ENCODE measurements at regions of chr7 and their contacts with region 1.

Region 1: DNA sequence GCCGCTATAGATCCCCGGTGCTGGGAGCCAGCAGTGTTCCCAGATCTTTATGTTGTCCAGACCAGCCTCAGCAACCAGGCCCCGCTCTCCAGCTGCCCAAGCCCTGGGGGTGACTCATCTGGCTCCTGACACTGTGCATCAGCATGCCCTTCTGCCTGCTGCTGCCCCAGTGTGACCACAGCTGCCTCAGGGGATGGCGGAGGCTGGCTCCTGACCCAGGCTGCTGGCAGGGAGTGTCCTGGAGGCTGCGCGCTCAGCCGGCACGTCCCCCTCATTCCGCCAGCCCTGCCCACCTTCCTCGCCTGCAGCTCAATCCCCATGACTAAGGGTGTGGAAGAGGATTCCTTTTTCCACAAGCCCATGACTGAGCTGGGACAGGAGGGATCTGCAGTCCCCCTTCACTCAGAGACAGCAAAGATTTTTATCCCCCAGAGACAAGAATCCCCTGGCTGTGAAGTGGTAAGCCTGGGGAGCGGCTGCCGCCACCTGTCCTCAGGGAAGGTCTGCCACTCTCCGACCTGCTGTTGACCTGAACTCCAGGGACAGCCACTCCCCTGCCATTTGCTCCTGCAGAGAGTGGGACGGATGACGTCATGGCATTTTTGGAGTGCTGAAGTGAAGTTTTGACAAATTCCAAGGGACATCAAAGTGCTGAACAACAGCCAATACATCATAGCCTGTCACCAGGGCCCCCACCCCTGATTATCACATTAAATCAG is 182.8 kb upstream of the BMPER start:
- DNase-seq: peak; percentile 59
- H3K4me3 ChIP-seq: no peak overlapping the region
- H3K27ac ChIP-seq: peak overlapping the region; percentile 33
- H3K4me1 ChIP-seq: peaks cover 55% of the 10 kb centered on the region
- H3K27me3 ChIP-seq: no peaks in the 10 kb centered on the region
- CTCF ChIP-seq: no peak
- POLR2A ChIP-seq: no peak

Region 2: DNA sequence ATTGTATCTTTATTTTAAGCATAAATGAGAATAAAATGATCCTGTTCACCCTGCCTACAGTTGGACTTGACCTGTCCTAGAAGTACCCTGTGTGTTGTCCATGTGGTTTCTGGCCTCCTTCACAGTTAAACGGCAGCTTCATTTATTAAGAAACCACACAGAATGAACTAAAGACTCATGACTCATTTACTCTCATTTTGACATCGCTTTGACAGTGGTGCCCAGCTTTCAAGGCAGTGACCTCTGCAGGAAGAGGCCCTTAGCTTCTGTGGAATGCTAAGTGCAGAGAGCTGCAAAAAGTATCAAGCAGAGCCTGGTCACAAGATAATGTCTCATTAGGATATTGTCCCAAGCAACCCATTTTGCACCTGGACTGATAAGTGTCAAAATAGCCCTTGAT is 1133.9 kb before region 1 on chr7:
- CTCF ChIA-PET with region 1: no interaction called
- POLR2A ChIA-PET with region 1: no interaction called
- dilution Hi-C with region 1: no loop called
- intact Hi-C with region 1: loop called (anchors 5 kb)
- DNase-seq: peak; percentile 85
- H3K4me3 ChIP-seq: no peak overlapping the region
- H3K27ac ChIP-seq: peak overlapping the region; percentile 91
- H3K4me1 ChIP-seq: peaks cover 49% of the 10 kb centered on the region
- H3K27me3 ChIP-seq: no peaks in the 10 kb centered on the region
- CTCF ChIP-seq: peak in 1 of 2 donors; percentile 6
- POLR2A ChIP-seq: no peak

Region 3: DNA sequence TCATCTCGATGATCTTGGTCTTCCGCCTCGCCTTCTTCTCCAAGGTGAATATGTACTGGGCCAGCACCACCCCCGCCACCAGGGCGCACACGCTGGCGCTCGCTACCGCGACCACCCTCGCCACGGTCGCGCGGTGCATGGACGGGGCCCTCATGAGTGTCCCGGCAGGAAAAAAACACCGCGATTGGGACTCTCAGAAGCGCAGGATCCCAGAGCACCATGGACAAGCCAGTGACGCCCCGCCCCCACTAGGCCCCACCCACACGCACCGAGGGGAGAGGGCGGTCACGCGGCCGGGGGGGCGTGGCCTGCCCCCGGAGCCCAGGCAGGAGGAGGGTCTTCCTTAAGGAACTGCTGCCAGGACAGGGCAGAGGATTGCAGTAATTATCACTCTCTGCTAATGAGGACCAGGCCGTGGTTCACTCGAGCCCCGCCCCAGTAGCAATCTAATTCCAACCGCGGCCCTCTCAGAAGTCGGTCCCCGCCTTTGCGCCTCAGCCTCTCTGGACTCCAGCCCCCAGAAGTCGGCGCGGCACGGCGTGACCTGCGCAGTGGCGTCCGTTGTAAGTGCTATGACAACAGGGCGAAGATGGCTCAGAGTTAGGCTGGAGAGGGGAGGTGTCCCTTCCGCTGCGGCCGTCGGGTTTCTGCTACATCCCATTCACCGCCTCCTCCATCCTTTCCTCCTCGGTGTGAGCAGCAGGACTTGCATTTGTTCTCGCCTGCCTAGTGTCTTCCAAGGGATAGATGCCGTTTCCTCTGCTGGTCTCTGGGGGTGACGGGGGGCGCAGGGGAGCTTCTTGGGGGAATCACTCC is 593.3 kb before region 1 on chr7 and contains the start of gene BBS9:
- CTCF ChIA-PET with region 1: no interaction called
- POLR2A ChIA-PET with region 1: no interaction called
- dilution Hi-C with region 1: no loop called
- intact Hi-C with region 1: loop called (anchors 2 kb)
- DNase-seq: peak; percentile 96
- H3K4me3 ChIP-seq: peak within 1 kb of the TSS; percentile 48 to 85 (median 71)
- H3K27ac ChIP-seq: no peak within 1 kb of the TSS
- H3K4me1 ChIP-seq: peaks cover 8% of the 10 kb centered on the region
- H3K27me3 ChIP-seq: no peaks in the 10 kb centered on the region
- CTCF ChIP-seq: no peak
- POLR2A ChIP-seq: peak; percentile 64
- total RNA-seq, gene BBS9: 14.1 and 17.4 TPM in 2 replicates

Region 4: GRCh38 chr7:33354201-33354600 is 368.3 kb before region 1 on chr7:
- CTCF ChIA-PET with region 1: no interaction called
- POLR2A ChIA-PET with region 1: no interaction called
- dilution Hi-C with region 1: no loop called
- intact Hi-C with region 1: loop called (anchors 1 kb)
- DNase-seq: peak; percentile 61
- H3K4me3 ChIP-seq: no peak overlapping the region
- H3K27ac ChIP-seq: no peak overlapping the region
- H3K4me1 ChIP-seq: peaks cover 3% of the 10 kb centered on the region
- H3K27me3 ChIP-seq: no peaks in the 10 kb centered on the region
- CTCF ChIP-seq: no peak
- POLR2A ChIP-seq: no peak

Region 5: DNA sequence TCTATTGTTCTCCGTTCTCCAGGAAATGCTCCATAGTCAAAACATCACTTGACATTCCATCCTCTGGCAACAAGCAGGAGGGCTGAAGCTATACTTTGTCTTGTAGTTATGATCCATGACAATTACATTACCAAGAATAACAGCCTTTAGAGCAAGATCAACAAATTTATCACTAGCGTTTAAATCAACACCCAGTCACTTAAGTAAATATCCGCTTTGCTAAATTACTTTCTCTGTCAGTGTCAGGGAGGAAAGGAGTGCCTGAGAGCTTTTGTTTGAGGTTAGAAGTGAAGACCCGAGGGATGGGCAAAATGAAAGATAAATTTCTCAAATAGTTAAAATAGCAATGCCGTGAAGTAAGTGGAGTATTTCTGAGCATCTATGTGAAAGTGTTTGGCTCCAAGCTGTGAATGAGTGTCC is 53.3 kb before region 1 on chr7:
- CTCF ChIA-PET with region 1: no interaction called
- POLR2A ChIA-PET with region 1: no interaction called
- dilution Hi-C with region 1: no loop called
- intact Hi-C with region 1: loop called (anchors 1 kb)
- DNase-seq: peak; percentile 93
- H3K4me3 ChIP-seq: peak overlapping the region in 1 of 3 experiments; percentile 31
- H3K27ac ChIP-seq: peak overlapping the region; percentile 85
- H3K4me1 ChIP-seq: peaks cover 30% of the 10 kb centered on the region
- H3K27me3 ChIP-seq: no peaks in the 10 kb centered on the region
- CTCF ChIP-seq: no peak
- POLR2A ChIP-seq: peak; percentile 41

Region 6: DNA sequence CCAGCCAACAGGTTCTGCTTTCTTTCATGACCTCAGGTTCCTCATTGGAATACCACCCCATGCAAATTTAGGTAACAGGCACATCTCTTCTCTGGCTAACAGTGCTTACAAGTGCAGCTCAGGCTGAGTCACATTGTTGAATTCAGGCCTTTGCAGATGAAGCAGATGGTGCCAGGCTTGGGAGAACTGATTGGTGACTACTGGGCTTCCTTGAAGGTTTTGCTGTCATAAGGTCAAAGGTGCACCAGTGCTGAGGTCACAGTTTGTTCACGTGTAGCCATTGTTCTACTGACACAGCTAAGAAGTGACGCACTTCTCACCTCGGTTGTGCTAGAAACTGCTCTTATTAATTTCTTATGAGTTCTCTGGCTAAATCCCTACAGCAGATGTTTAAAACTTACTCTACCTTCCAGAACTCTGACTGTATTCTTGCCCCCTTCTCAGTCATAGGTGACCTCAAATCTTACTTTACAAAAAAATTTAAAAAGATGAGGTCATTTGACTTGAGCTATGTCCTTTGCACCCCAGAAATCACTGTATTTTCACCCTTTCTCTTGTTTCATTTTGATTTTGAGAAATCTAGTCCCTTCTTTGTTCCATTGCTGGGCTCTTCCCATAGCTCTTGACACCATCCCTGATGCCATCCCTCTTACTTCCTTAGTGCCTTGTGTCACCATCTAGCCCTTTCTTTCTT is 54.4 kb after region 1 on chr7:
- CTCF ChIA-PET with region 1: no interaction called
- POLR2A ChIA-PET with region 1: no interaction called
- dilution Hi-C with region 1: no loop called
- intact Hi-C with region 1: no loop called
- DNase-seq: peak; percentile 21
- H3K4me3 ChIP-seq: no peak overlapping the region
- H3K27ac ChIP-seq: no peak overlapping the region
- H3K4me1 ChIP-seq: peaks cover 6% of the 10 kb centered on the region
- H3K27me3 ChIP-seq: no peaks in the 10 kb centered on the region
- CTCF ChIP-seq: no peak
- POLR2A ChIP-seq: no peak

Region 7: GRCh38 chr7:33807779-33808482 is 85.4 kb after region 1 on chr7:
- CTCF ChIA-PET with region 1: interaction called, 5 read pairs
- POLR2A ChIA-PET with region 1: no interaction called
- dilution Hi-C with region 1: no loop called
- intact Hi-C with region 1: loop called (anchors 2 kb)
- DNase-seq: peak; percentile 91
- H3K4me3 ChIP-seq: no peak overlapping the region
- H3K27ac ChIP-seq: peak overlapping the region; percentile 81
- H3K4me1 ChIP-seq: peaks cover 27% of the 10 kb centered on the region
- H3K27me3 ChIP-seq: no peaks in the 10 kb centered on the region
- CTCF ChIP-seq: peak; percentile 62 to 66
- POLR2A ChIP-seq: no peak

Region 8: GRCh38 chr7:34296663-34297062 is 574.1 kb after region 1 on chr7:
- CTCF ChIA-PET with region 1: no interaction called
- POLR2A ChIA-PET with region 1: no interaction called
- dilution Hi-C with region 1: no loop called
- intact Hi-C with region 1: no loop called
- DNase-seq: no peak
- H3K4me3 ChIP-seq: no peak overlapping the region
- H3K27ac ChIP-seq: no peak overlapping the region
- H3K4me1 ChIP-seq: peaks cover 20% of the 10 kb centered on the region
- H3K27me3 ChIP-seq: no peaks in the 10 kb centered on the region
- CTCF ChIP-seq: no peak
- POLR2A ChIP-seq: no peak

Measured in endothelial cell of umbilical vein (primary cell).